Right cardiac atrium (tissue), 5 donors: ENCODE measurements at regions of chr6 and their contacts with region 1.

Region 1: GRCh38 chr6:31366693-31367470 is 9.9 kb upstream of the HLA-B start:
- DNase-seq: peak; percentile 86 to 96 (median 96)
- ATAC-seq: peak; percentile 98 to 99
- H3K4me3 ChIP-seq: no peak overlapping the region
- H3K27ac ChIP-seq: no peak overlapping the region
- H3K4me1 ChIP-seq: no peaks in the 10 kb centered on the region
- H3K27me3 ChIP-seq: no peaks in the 10 kb centered on the region

Region 2: DNA sequence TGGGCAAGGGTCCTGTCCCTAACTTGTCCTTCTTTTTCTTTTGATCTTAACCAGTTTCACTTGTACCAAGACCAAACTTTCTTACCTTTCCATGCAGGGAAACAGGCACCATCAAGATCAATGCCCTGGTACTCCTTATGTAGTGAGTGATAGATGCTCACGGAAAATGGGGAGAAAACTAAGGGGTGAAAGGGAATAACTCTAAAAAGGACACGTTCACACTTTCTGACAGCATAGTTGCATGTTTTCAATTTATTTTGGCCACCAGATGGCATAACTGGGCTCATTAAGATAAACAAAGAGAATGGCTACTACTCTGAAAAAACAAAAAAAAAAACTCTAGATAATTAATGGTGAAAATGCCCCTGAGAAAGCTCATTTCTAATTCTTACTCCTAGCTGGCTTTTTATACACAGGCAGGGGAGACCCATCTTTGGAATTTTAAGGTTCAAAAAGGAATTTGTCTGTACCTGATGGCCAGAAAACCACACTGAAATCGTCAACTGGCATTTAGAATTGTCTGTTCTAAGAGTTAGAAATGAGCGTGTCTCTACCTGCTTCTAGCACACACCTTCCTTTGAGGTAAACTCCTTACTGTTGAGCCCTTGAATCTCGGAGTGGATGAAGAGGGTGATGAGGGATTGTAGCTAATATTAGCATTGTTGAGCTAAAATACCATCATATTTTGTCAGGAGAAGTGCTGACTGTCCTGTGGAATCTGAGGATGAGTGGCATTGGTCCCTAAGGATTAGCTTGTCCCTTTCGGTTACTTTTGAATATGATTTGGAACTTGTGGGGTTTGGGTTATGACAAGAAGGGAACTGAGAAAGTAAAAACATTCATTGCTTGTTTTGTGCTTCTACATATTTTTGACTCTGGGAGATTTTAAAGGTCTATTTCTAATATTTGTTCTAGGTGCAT is 544.8 kb before region 1 on chr6:
- intact Hi-C with region 1: no loop called
- DNase-seq: no peak
- ATAC-seq: no peak
- H3K4me3 ChIP-seq: no peak overlapping the region
- H3K27ac ChIP-seq: peak overlapping the region; percentile 48
- H3K4me1 ChIP-seq: peaks cover 8% of the 10 kb centered on the region
- H3K27me3 ChIP-seq: no peaks in the 10 kb centered on the region

Region 3: GRCh38 chr6:31128093-31128676 is 238.7 kb before region 1 on chr6:
- intact Hi-C with region 1: loop called in 2 of 4 experiments (anchors 5 to 10 kb)
- DNase-seq: peak in 2 of 3 donors; percentile 47 to 83
- ATAC-seq: no peak
- H3K4me3 ChIP-seq: no peak overlapping the region
- H3K27ac ChIP-seq: no peak overlapping the region
- H3K4me1 ChIP-seq: peaks cover 14% of the 10 kb centered on the region
- H3K27me3 ChIP-seq: no peaks in the 10 kb centered on the region

Region 4: DNA sequence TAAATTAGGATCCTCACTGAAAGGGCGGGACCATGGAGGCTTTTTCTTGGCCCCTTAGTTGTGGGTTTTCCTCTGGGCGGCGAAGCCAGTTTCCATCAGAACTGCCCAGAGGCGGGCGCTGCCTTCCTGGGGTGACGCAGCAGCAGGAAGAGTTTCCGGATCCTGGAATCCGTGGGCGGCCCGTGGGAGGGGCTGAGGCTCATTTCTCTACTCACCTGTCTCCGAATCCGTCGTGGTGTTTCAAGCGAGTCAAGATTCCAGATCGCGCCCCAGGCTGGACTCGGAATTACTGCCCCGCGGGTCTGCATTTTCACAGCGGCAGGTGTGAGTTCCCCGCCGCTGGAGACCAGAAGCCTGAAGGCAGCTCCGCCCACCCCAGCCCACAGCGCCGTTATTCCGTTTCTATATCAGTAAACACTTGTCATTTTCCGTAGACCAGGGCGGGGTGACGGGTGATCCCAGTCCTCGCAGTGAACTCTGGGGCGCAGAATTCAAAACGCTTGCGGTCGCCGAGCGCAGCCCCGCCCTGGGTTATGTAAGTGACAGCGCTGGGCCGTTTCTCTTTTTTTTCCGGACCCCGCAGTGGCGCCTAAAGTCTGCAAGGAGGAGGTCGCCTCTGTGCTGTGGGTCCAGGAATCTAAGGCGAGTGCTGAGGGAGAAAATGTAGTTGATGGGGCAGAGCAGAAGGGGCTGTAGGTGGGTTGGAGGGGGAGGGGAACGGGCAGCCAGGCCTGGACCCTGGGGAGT is 169.2 kb before region 1 on chr6:
- intact Hi-C with region 1: loop called (anchors 1 to 5 kb)
- DNase-seq: peak; percentile 93 to 97 (median 96)
- ATAC-seq: peak; percentile 93 to 94
- H3K4me3 ChIP-seq: peak overlapping the region; percentile 67
- H3K27ac ChIP-seq: peak overlapping the region; percentile 96
- H3K4me1 ChIP-seq: no peaks in the 10 kb centered on the region
- H3K27me3 ChIP-seq: no peaks in the 10 kb centered on the region

Region 5: DNA sequence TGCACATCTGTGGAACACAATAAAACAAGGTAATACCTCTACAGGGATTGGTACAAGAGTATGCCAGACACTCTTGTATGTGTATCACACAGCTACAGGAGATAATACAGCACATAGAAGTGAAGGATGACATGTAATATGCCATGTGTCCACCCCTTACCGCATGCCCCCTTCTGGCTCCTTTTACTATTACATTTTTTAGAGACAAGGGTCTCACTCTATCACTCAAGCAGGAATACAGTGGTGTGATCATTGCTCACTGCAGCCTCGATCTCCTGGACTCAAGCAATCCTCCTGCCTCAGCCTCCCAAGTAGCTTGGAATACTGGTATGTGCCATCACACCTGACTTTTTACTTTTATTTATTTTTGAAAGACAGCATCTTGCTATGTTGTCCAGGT is 230.1 kb after region 1 on chr6:
- intact Hi-C with region 1: no loop called
- DNase-seq: no peak
- ATAC-seq: peak in 1 of 2 donors; percentile 56
- H3K4me3 ChIP-seq: no peak overlapping the region
- H3K27ac ChIP-seq: no peak overlapping the region
- H3K4me1 ChIP-seq: no peaks in the 10 kb centered on the region
- H3K27me3 ChIP-seq: no peaks in the 10 kb centered on the region